GM18951 (cell line): ENCODE measurements at regions of chr16 and their contacts with region 1.

Region 1: DNA sequence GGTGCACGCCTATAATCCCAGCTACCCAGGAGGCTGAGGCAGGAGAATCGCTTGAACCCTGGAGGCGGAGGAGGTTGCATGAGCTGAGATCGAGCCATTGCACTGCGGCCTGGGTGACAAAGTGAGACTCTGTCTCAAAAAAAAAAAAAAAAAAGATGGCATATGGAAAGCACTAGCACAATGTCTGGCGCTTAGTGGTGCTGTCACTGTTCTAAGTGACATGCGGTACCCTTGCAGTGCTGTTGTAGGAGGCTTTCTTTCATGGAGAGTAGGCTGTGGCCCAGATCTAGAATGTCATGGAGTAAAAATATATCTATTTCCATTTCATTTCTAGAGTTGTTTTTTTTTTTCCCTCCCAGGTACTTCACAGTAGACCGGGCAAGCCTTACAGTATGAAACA is 14.6 kb upstream of the METTL9 start:
- POLR2A ChIP-seq: no peak

Region 2: DNA sequence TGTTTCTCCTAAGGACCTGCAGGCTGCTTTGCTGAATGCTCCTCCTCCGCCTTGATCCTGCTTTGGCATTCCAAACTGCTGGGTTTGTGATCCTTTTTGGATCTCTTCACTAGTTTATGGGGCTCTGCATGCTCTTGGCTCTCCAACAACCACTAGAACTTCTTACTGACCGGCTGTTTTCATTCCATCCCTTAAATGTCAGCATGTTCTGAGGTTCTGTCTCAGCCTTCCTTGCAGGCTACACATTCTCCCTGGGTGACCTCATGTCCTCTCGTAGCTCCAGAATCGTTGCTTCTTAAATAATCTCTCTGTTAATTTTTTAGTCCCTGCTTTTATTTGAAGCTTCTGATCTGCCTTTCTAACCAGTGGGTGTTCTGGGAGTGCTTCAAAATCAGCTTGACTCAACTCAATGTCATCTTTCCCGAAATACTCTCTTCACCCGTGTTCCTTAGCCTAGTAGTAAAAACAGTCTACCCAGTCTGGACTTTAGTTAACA is 1110.1 kb after region 1 on chr16:
- in situ Hi-C with region 1: loop called (anchors 5 kb)
- POLR2A ChIP-seq: no peak